ENCODE measurements at regions of chr10 and their contacts with region 1.

Region 1: GRCh38 chr10:104308439-104308903 is 29.8 kb downstream of the ITPRIP start:
- DNase-seq: peak; percentile 34
- H3K4me3 Mint-ChIP-seq: peak overlapping the region; percentile 46
- H3K27ac Mint-ChIP-seq: peak overlapping the region; percentile 32
- H3K4me1 Mint-ChIP-seq: peaks cover 76% of the 10 kb centered on the region
- H3K27me3 Mint-ChIP-seq: peaks cover 2% of the 10 kb centered on the region

Region 2: GRCh38 chr10:104291439-104291951 is 17.0 kb before region 1 on chr10:
- intact Hi-C with region 1: loop called (anchors 1 kb)
- DNase-seq: peak; percentile 82
- H3K4me3 Mint-ChIP-seq: no peak overlapping the region
- H3K27ac Mint-ChIP-seq: peak overlapping the region; percentile 0
- H3K4me1 Mint-ChIP-seq: peaks cover 16% of the 10 kb centered on the region
- H3K27me3 Mint-ChIP-seq: peaks cover 40% of the 10 kb centered on the region

Region 3: DNA sequence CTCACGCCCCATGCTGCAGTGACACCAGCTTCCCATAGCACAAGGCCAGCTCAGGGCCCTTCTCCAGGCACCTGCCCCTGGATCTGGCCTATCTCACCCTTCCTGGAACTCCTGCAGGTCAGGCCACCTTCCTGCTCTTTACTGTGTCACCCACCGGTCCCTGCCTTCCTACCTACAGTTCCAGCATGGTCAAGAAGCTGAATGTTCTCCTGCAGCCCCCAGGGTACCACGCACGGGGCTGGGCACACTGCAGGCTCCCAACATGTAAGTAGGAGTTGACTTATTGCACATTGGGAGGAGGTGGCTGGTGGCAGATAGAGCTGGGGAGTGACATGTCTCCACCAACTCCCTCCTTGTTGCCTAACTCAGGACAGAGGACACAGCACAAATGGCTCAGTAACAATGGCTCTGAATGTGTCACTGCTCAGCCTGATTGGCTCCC is 15.3 kb after region 1 on chr10:
- intact Hi-C with region 1: loop called (anchors 1 kb)
- DNase-seq: no peak
- H3K4me3 Mint-ChIP-seq: peak overlapping the region; percentile 73
- H3K27ac Mint-ChIP-seq: peak overlapping the region; percentile 91
- H3K4me1 Mint-ChIP-seq: peaks cover 96% of the 10 kb centered on the region
- H3K27me3 Mint-ChIP-seq: no peaks in the 10 kb centered on the region

Region 4: DNA sequence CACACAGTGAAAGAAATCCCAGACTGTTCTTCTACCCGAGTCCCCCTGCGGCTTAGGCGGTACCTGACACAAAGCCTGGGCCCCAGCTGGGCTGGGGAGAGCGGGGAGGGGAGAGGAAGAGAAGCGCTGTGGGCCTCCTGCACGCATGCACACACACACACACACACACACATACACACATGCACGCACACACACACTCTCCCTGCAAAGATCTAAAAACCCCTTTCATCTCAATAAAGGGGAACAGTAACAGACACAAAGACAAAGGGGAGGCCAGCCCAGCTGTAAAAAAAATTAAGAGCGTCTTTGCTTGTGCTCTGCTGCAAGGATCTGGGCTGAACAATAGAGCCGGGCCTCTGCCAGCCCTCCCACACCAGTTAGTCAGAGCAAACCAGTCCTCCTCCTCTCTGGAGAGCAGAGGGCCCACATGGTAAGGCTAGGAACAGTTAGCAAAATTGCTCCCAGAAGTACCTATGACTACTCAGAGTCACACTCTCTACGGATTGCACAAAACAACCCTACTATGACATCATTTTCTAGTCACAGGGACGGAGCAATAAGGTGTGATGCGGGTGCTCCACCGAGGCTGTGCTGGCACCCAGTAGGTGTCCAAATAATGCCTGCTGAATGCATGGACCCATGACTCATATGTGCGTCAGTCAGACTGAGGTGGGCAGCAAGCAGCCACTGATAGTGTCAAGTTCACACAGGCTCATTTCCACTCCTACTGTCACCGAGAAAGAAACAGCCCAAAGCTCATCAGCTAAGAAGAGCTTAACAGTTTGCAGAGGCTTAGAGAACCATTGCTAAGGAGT is 20.6 kb after region 1 on chr10:
- intact Hi-C with region 1: loop called (anchors 1 kb)
- DNase-seq: peak; percentile 56
- H3K4me3 Mint-ChIP-seq: peak overlapping the region; percentile 68
- H3K27ac Mint-ChIP-seq: peak overlapping the region; percentile 93
- H3K4me1 Mint-ChIP-seq: peaks cover 100% of the 10 kb centered on the region
- H3K27me3 Mint-ChIP-seq: no peaks in the 10 kb centered on the region

Region 5: DNA sequence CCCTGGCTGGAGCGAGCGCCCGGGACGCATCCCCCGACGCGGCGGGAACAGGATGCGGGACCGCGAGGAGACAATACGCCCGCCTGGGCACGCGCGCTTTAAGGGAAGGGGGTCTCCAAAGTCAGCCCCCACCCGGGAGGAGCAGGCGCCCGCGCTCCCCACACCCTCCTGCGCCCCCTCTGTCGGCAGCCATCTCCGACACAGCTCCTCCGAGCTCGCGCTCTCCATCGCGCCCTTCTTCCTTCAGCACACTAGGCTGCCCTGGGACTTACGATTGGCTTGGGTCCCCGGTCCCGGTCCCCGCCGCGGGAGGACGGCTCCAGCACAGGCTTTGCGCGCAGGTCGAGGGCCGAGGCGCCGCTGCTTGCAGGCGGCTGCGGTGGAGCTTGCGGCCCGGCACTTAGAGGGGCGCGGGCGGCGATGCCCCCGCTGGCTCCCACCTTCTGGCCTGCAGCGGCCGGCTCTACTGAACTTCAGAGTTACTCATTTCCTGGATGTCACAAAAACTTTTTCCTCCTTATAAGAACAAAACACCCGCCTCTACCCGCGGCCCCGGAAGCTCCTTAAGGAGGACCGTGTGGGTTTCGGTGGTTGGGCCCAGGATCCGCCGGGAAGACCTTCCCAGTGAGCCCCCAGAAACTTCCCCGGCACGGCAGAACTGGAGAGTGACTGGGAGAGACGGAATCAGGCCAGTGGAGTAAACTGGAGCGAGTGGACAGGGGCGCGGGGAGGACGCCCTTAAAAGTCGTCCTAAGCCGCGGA is 29.7 kb after region 1 on chr10 and contains the start of gene ITPRIP:
- intact Hi-C with region 1: loop called (anchors 1 kb)
- DNase-seq: peak; percentile 68
- H3K4me3 Mint-ChIP-seq: peak within 1 kb of the TSS; percentile 100
- H3K27ac Mint-ChIP-seq: peak within 1 kb of the TSS; percentile 100
- H3K4me1 Mint-ChIP-seq: peaks cover 57% of the 10 kb centered on the region
- H3K27me3 Mint-ChIP-seq: peaks cover 5% of the 10 kb centered on the region
- total RNA-seq, gene ITPRIP: 17.3 and 18.1 TPM in 2 replicates

Region 6: GRCh38 chr10:104359811-104360210 is 51.3 kb after region 1 on chr10:
- intact Hi-C with region 1: no loop called
- DNase-seq: no peak
- H3K4me3 Mint-ChIP-seq: no peak overlapping the region
- H3K27ac Mint-ChIP-seq: no peak overlapping the region
- H3K4me1 Mint-ChIP-seq: peaks cover 7% of the 10 kb centered on the region
- H3K27me3 Mint-ChIP-seq: peaks cover 10% of the 10 kb centered on the region